Right ventricle myocardium inferior (tissue), 1 donor: ENCODE measurements at regions of chr12 and their contacts with region 1.

Region 1: GRCh38 chr12:2273288-2273687 is 220.5 kb downstream of the CACNA1C start:
- DNase-seq: peak; percentile 83
- ATAC-seq: peak; percentile 71

Region 2: DNA sequence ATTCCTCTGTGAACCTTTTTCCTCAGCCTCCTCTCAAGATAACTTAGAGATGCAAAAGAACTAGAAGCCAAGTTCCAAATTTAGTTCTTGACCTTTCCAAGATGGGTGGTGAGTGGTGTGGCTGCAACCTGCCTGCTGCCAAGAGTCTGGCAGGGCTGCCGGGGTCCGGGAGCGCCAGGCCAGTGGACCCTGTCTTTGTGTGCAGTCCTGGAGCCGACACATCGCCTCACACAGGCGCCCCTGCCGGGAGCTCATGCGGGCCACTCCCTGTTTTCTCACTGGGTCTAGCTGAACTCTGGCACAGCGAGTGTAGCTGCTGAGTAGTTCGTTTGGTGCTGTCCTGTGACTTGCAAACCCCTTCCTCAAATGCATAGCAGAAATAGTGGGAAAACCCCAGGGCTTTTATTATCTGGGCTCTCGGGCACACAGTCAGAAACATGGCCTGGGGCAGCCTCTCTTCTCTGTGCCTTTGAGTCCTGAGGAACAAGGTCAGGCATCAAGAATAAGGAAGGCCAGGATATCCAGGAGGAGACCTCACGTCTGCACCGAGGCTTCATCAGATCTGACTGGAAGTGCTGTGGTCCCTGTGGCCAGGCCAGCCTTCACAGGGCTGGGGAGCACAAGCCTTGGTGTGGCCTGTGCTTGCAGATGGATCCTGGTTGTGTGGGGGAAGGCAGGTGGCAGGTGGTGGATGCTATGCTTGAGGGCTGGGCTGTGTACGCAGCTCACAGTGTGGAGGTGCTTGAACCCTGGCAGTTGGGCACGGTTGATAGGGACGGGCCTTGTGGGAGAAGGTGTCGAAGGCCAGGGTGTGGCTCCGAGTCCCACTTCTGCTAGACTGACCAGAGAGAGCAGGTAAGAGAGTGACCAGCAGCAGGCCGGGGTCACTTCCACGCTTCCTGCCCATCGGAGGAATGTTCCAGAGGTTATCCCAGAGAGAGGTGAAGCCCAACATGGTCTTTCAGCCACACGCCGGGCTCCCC is 135.3 kb before region 1 on chr12:
- intact Hi-C with region 1: no loop called
- DNase-seq: peak; percentile 65
- ATAC-seq: peak; percentile 42

Region 3: GRCh38 chr12:2179953-2180736 is 93.1 kb before region 1 on chr12:
- intact Hi-C with region 1: loop called (anchors 5 kb)
- DNase-seq: peak; percentile 77
- ATAC-seq: peak; percentile 87

Region 4: GRCh38 chr12:2341871-2342270 is 68.6 kb after region 1 on chr12:
- intact Hi-C with region 1: no loop called
- DNase-seq: no peak
- ATAC-seq: no peak